Transverse colon (tissue), 4 donors: ENCODE measurements at regions of chr2 and their contacts with region 1.

Region 1: DNA sequence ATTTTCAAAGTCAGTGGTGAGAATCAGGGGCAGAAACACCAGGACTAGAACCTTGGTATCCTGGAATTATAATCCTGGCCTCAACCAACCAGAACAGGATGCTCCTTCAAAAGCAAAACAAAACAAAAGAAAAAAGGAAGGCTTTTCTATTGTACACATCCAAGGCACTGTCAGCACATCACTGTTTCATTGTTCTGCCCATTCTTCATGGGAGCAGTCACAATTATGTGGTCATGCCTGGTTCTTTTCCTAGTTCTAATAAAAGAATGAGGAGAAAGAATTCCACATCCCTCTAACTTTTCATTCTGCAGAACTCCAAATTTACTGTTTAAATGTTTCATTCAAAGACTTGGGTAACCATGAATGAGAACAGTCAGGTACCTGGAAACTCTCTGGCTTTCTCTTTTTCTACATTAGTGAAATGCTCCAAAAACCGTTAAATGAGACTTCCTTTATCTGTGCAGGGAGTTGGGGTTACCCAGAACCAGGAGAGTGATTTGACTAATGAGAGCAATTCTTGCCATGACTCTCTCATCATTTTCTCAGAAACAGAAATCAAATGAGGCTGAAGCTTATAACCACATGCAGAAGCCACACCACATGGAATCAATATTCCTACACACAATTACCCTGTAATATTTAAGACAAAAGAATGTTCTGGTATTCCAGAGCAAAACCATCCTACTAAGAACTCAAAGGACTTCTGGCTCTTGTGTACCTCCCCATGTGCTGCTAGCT is 110.9 kb upstream of the CCDC150 start:
- DNase-seq: no peak
- H3K4me3 ChIP-seq: no peak overlapping the region
- H3K27ac ChIP-seq: no peak overlapping the region
- H3K4me1 ChIP-seq: no peaks in the 10 kb centered on the region
- H3K27me3 ChIP-seq: no peaks in the 10 kb centered on the region
- CTCF ChIP-seq: no peak
- EP300 ChIP-seq: no peak
- POLR2A ChIP-seq: no peak

Region 2: GRCh38 chr2:196594158-196594557 is 65.5 kb after region 1 on chr2:
- in situ Hi-C with region 1: no loop called
- intact Hi-C with region 1: loop called (anchors 2 kb)
- DNase-seq: no peak
- H3K4me3 ChIP-seq: no peak overlapping the region
- H3K27ac ChIP-seq: no peak overlapping the region
- H3K4me1 ChIP-seq: peaks cover 0 to 11% (median 2%) of the 10 kb centered on the region in 4 donors
- H3K27me3 ChIP-seq: peaks cover 67% of the 10 kb centered on the region
- CTCF ChIP-seq: no peak
- EP300 ChIP-seq: no peak
- POLR2A ChIP-seq: no peak